ENCODE measurements at regions of chr17 and their contacts with region 1.

Region 1: DNA sequence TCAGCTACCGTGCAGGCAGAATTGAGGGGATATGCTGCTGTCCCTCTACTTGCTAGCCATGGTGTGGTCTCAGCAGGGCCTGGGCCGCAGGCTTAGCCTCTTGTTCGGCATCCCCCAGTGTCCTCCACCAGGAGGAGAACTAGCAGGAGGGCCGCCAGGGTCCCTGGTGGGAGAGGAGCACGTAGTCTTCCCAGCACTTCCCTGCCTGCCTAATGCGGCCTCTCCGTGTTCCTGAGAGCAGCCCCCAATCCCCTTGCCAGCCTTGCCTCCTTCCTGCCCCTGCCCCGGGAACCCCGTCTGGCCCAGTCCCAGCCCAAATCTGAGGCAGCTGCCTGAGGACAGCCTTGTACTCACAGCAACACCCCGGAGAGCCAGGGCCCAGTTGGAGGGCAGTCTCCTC is 38.1 kb downstream of the PLD6 start:
- DNase-seq: peak in 1 of 2 donors; percentile 46
- ATAC-seq: no peak
- H3K4me3 ChIP-seq: no peak overlapping the region
- H3K27ac ChIP-seq: no peak overlapping the region
- H3K4me1 ChIP-seq: peaks cover 4% of the 10 kb centered on the region
- H3K27me3 ChIP-seq: no peaks in the 10 kb centered on the region
- CTCF ChIP-seq: no peak

Region 2: DNA sequence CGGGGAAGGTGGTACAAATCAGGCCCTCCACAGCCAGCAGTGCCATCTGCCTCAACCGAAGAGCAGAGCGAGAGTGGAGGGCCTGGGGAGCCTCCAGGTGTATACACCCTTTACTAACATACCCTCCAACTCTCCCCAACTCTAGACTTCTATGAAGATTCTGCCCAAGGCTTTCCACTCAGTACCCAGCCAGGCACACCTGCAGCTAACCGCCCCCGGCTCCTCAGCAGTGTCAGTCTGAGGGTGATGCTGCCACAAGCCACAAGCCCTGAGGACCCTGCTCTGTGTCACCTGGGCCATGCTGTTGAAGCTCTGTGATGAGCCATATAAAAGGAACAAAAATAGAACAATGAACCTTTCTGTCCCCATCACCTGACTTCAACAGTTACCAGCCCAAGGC is 818.6 kb before region 1 on chr17:
- intact Hi-C with region 1: loop called in 1 of 2 experiments (anchors 5 kb)
- DNase-seq: no peak
- ATAC-seq: no peak
- H3K4me3 ChIP-seq: no peak overlapping the region
- H3K27ac ChIP-seq: no peak overlapping the region
- H3K4me1 ChIP-seq: peaks cover 11% of the 10 kb centered on the region
- H3K27me3 ChIP-seq: no peaks in the 10 kb centered on the region
- CTCF ChIP-seq: no peak

Region 3: GRCh38 chr17:17108451-17109049 is 59.4 kb before region 1 on chr17:
- intact Hi-C with region 1: loop called in 1 of 2 experiments (anchors 10 kb)
- DNase-seq: peak in 1 of 2 donors; percentile 60
- ATAC-seq: peak in 3 of 4 donors; percentile 17 to 37 (median 34)
- H3K4me3 ChIP-seq: no peak overlapping the region
- H3K27ac ChIP-seq: peak overlapping the region; percentile 73
- H3K4me1 ChIP-seq: peaks cover 97% of the 10 kb centered on the region
- H3K27me3 ChIP-seq: no peaks in the 10 kb centered on the region
- CTCF ChIP-seq: no peak